AG04449 (cell line): ENCODE measurements at regions of chr19 and their contacts with region 1.

Region 1: GRCh38 chr19:31548941-31549340 is 199.7 kb upstream of the TSHZ3 start:
- DNase-seq: no peak
- H3K4me3 ChIP-seq: no peak overlapping the region
- CTCF ChIP-seq: peak; percentile 75

Region 2: GRCh38 chr19:31054430-31054829 is 494.5 kb before region 1 on chr19:
- CTCF ChIA-PET with region 1: interaction called, 34 read pairs
- POLR2A ChIA-PET with region 1: no interaction called
- DNase-seq: peak; percentile 5
- H3K4me3 ChIP-seq: no peak overlapping the region
- CTCF ChIP-seq: peak; percentile 85

Region 3: DNA sequence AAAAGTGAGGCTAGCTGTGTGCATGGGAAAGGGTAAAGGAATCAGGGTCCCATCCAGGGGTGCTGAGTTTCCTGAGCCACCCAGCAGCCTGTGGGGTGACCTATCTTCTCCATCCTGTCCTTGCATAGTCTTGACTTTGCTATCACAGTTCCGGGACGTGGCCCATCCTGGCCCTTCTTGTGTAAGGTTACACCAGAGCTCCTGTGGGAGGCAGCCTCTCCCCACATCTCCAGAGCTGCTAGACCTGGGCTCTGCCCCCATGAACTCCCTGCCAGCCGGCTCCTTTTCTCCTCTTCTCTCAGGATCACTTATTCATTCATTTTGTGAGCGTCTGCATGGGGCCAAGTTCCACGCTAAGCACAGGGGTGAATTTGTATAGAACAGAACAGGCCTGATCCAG is 438.6 kb before region 1 on chr19:
- CTCF ChIA-PET with region 1: interaction called, 19 read pairs
- POLR2A ChIA-PET with region 1: no interaction called
- DNase-seq: no peak
- H3K4me3 ChIP-seq: no peak overlapping the region
- CTCF ChIP-seq: peak; percentile 54